SK-N-SH (cell line): ENCODE measurements at regions of chr9 and their contacts with region 1.

Region 1: GRCh38 chr9:130682490-130683121 is 11.0 kb upstream of the EXOSC2 start:
- DNase-seq: peak; percentile 89
- H3K4me3 ChIP-seq: peak overlapping the region; percentile 47 to 58
- H3K27ac ChIP-seq: no peak overlapping the region
- H3K4me1 ChIP-seq: peaks cover 0 to 11% of the 10 kb centered on the region in 2 experiments; a peak in 1 of 4 replicates
- H3K27me3 ChIP-seq: no peaks in the 10 kb centered on the region
- CTCF ChIP-seq: peak; percentile 81
- EP300 ChIP-seq: no peak
- RAD21 ChIP-seq: peak; percentile 93

Region 2: GRCh38 chr9:130446111-130446861 is 236.3 kb before region 1 on chr9:
- CTCF ChIA-PET with region 1: interaction called, 38 read pairs
- POLR2A ChIA-PET with region 1: no interaction called
- DNase-seq: peak; percentile 81
- H3K4me3 ChIP-seq: no peak overlapping the region
- H3K27ac ChIP-seq: peak overlapping the region in 1 of 2 experiments; percentile 91; a peak in 2 of 4 replicates
- H3K4me1 ChIP-seq: peaks cover 13 to 56% of the 10 kb centered on the region in 2 experiments; a peak in 3 of 4 replicates
- H3K27me3 ChIP-seq: no peaks in the 10 kb centered on the region
- CTCF ChIP-seq: no peak
- EP300 ChIP-seq: peak in 1 of 2 experiments; percentile 13; a peak in 1 of 4 replicates
- RAD21 ChIP-seq: no peak

Region 3: DNA sequence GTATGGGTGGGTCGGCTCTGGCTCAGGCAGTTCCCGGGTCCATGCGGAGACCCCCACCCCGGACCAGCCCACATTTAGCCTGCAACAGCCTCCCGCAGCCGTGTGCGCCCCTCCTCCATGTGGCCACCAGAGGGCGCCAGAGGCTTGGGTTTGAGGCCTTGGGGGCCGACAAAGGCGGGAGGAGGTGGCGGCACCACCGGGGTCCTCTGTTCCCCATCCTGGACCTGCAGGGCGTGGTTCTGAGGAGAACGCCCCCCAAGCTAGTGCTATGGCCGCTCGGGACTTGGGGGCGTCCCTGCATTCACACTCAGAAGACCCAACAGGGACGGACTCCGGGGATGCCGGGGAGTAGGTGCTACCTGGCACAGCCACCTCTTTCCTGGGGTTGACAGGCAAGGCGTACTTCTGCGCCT is 221.4 kb before region 1 on chr9:
- CTCF ChIA-PET with region 1: interaction called, 520 read pairs
- POLR2A ChIA-PET with region 1: interaction called, 4 read pairs
- DNase-seq: peak; percentile 87
- H3K4me3 ChIP-seq: peak overlapping the region in 1 of 2 experiments; percentile 37; a peak in 1 of 4 replicates
- H3K27ac ChIP-seq: no peak overlapping the region
- H3K4me1 ChIP-seq: peaks cover 0 to 5% of the 10 kb centered on the region in 2 experiments; a peak in 1 of 4 replicates
- H3K27me3 ChIP-seq: 0 out of 2 replicates have a peak, but pooled peaks cover 6% of the 10 kb centered on the region
- CTCF ChIP-seq: peak; percentile 83
- EP300 ChIP-seq: no peak
- RAD21 ChIP-seq: peak; percentile 89

Region 4: DNA sequence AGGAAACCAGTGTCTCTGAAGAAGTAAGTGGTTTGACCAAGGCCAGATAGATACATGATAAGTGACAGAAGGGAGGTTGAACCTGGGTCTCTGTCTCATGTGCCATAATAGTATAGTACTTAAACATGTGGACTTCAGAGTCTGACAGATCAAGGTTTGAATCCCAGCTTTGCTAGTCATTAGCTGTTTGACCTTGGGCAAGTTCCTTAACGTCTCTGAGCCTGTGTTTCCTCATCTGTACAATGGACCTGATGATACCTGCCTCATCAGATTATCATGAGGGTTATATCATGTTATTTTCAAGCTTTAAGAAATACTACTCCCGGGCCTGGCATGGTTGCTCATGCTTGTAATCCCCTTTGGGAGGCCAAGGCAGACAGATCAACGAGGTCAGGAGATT is 78.3 kb before region 1 on chr9:
- CTCF ChIA-PET with region 1: interaction called, 14 read pairs
- POLR2A ChIA-PET with region 1: no interaction called
- DNase-seq: no peak
- H3K4me3 ChIP-seq: no peak overlapping the region
- H3K27ac ChIP-seq: no peak overlapping the region
- H3K4me1 ChIP-seq: no peaks in the 10 kb centered on the region; a peak in 1 of 4 replicates
- H3K27me3 ChIP-seq: no peaks in the 10 kb centered on the region
- CTCF ChIP-seq: no peak
- EP300 ChIP-seq: no peak
- RAD21 ChIP-seq: no peak

Region 5: GRCh38 chr9:130693426-130694191 is 11.0 kb after region 1 on chr9 and contains the start of gene EXOSC2:
- CTCF ChIA-PET with region 1: interaction called, 18 read pairs
- POLR2A ChIA-PET with region 1: no interaction called
- DNase-seq: peak; percentile 95
- H3K4me3 ChIP-seq: peak within 1 kb of the TSS; percentile 70 to 76
- H3K27ac ChIP-seq: peak within 1 kb of the TSS; percentile 23 to 74; a peak in 3 of 4 replicates
- H3K4me1 ChIP-seq: peaks cover 0 to 22% of the 10 kb centered on the region in 2 experiments; a peak in 1 of 4 replicates
- H3K27me3 ChIP-seq: no peaks in the 10 kb centered on the region
- CTCF ChIP-seq: no peak
- EP300 ChIP-seq: no peak
- RAD21 ChIP-seq: no peak
- polyA plus RNA-seq, gene EXOSC2: 28.7 and 36.8 TPM in 2 replicates

Region 6: GRCh38 chr9:130794923-130795495 is 112.4 kb after region 1 on chr9:
- CTCF ChIA-PET with region 1: no interaction called
- POLR2A ChIA-PET with region 1: no interaction called
- DNase-seq: no peak
- H3K4me3 ChIP-seq: no peak overlapping the region
- H3K27ac ChIP-seq: peak overlapping the region; percentile 24 to 80
- H3K4me1 ChIP-seq: peaks cover 4 to 10% of the 10 kb centered on the region in 2 experiments; a peak in 3 of 4 replicates
- H3K27me3 ChIP-seq: no peaks in the 10 kb centered on the region
- CTCF ChIP-seq: no peak
- EP300 ChIP-seq: no peak
- RAD21 ChIP-seq: no peak